ACHN (cell line): ENCODE measurements at regions of chr1 and their contacts with region 1.

Region 1: DNA sequence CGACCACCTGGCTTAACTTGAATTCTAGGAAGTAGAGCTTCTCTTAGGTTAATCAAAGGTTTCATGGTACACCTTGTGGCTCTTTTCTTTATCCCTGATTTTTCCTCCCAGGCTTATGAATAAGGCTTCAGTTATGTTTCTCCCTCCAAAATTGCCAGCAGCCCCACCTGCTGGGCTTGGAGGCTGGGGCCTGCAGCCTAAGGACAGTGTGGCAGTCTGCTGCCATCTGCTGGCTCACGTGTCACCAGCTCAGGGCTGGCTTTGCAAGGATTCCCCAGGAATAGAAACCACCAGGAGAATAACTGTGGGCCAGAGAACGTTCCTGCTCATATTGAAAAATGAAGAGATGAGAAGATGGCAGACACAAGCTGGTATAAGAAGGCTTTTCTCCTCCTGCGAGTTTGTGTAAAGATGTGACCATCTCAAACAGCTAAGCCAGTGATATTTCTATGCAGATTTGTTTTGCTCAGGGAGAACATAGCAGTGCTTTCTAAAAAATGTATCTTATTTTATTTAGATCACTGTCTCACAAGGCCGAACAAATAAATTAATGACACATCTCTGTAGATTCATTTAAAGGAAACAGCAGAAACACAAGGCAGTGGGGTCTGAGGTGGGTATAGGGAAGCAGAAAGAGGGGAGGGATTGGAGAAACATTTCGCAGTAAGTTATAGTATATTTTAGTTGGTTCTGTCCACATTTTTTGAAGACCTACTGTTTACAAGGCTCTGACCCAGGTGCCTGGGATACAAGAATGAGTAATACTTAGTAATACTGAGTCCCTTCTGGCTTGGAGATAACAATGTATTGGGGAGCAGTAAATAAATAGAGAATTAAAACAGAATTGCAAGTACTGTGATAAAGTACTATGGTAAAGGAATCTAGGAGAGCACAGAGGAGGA is 291.1 kb upstream of the SGIP1 start:
- DNase-seq: peak; percentile 55

Region 2: DNA sequence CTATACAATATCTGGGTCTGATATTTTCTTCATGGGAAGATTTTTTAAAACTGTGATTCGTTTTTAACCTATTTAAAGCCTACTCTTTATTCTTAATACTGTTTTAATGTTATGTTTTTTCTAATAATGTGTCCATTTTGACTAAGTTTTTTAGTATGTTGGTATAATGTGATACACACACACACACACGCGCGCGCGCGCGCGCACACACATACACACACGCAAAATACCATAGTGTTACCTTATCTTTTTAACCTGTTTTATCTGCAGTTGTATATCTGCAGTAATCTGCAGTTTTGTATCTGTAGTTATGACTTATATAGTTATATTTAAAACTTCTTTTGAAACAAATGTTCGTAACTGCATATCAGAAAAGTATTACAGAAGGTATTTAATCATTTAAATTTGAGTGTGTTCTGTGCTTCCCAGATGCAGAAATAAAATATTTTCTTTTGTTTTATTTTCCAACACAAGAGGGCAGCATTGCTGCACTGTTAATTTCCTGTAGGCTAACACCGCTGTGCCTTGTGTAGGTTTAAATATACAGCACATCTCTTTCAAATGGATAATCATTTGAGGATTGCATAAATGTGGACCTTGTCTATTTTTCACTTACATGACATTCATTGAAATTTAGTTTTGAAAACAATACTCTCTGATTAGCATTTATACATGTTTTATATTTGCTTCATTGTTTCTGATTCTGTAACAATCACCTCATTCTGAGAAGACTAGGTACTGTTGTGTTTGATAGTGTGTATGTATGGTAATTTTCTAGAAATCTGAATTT is 284.1 kb before region 1 on chr1:
- in situ Hi-C with region 1: loop called (anchors 25 kb)
- DNase-seq: peak; percentile 31

Region 3: DNA sequence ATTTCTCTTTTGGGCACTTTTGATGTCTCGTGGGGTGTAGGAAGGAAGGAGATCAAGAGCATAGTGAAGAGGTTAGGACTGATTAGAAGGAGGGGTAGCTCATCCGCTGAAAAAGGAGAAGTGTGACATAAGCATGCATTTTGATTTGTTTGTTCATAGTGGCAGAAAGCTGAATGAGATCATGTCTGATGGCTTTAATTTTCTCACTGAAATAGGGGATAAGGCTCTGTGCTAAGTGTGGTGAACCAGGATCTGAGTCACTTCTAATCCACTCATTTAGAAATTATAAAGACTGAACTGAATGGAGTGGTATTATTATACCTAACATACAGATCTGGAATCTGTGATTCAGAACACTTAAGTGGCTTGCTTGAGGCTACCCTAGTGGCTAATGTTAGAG is 105.7 kb before region 1 on chr1:
- in situ Hi-C with region 1: no loop called
- DNase-seq: no peak

Region 4: GRCh38 chr1:66402194-66402593 is 159.3 kb after region 1 on chr1:
- in situ Hi-C with region 1: no loop called
- DNase-seq: no peak